ENCODE measurements at regions of chr5 and their contacts with region 1.

Region 1: GRCh38 chr5:107501965-107502675 is 168.6 kb downstream of the EFNA5 start:
- DNase-seq: no peak
- ATAC-seq: no peak
- H3K4me3 ChIP-seq: no peak overlapping the region
- H3K27ac ChIP-seq: no peak overlapping the region
- H3K4me1 ChIP-seq: no peaks in the 10 kb centered on the region
- H3K27me3 ChIP-seq: no peaks in the 10 kb centered on the region
- CTCF ChIP-seq: no peak
- EP300 ChIP-seq: no peak
- POLR2A ChIP-seq: no peak
- RAD21 ChIP-seq: no peak

Region 2: DNA sequence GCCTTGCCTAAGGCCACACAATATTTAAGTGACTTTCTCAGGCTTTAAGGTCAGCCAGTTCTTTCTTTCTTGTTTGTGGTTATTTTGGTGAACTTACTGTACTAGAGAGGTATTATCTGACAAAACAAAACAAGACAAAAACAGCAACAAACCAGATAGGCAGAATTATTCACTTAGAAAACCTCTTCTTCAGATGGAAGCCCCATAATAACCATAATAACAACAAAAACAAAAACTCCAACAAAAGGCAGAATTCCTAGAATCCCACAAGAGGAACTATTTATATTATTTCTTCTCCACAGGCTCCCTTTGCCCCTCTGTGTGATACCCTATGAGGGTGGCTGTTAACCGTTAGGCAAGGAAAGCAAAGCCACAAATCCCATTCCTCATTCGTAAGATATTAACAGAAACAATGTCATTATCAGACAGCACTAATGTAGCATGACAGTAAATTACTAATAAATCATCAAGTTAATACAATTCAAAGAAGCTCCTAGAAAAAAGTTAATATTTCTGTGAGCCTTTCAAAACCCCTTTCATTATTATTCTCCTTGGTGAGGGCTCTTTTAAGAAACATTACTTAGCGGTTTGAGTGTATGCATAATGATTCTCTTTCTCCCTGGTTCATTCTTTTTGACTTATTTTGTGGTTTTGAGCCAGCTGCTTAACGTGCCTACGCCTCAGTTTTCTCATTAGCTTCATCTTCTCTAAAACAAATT is 106.3 kb before region 1 on chr5:
- CTCF ChIA-PET with region 1: no interaction called
- POLR2A ChIA-PET with region 1: no interaction called
- RAD21 ChIA-PET with region 1: no interaction called
- SMC1A ChIA-PET with region 1: no interaction called
- in situ Hi-C with region 1: no loop called
- intact Hi-C with region 1: no loop called
- DNase-seq: peak; percentile 57
- ATAC-seq: peak; percentile 83
- H3K4me3 ChIP-seq: no peak overlapping the region
- H3K27ac ChIP-seq: no peak overlapping the region
- H3K4me1 ChIP-seq: peaks cover 8% of the 10 kb centered on the region; the same call in 1 of the 2 replicates
- H3K27me3 ChIP-seq: no peaks in the 10 kb centered on the region
- CTCF ChIP-seq: no peak
- EP300 ChIP-seq: peak; percentile 62 to 68; a peak in 3 of 4 replicates
- POLR2A ChIP-seq: no peak
- RAD21 ChIP-seq: no peak

Region 3: DNA sequence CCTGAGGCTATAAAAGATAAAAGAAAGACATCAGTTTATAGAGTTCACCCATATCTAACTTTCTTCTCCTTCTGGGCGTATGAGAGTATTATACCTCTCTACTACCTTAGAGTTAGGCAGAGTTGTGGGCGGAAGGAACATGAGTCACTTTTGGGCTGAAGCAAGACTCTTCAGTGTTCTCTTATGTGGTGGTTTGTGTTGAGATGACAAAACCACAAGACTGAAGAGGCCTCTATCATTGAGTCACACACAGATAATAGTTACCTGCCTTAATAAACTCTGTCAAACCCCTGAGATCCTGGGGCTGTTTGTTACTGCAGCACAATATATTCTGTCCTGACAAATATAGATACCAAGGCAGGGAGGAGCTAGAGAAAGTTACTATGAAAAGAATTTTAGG is 15.6 kb before region 1 on chr5:
- CTCF ChIA-PET with region 1: interaction called, 4 read pairs
- POLR2A ChIA-PET with region 1: interaction called, 3 read pairs
- RAD21 ChIA-PET with region 1: no interaction called
- SMC1A ChIA-PET with region 1: interaction called, 11 read pairs
- in situ Hi-C with region 1: no loop called
- intact Hi-C with region 1: no loop called
- DNase-seq: peak; percentile 48
- ATAC-seq: peak; percentile 91
- H3K4me3 ChIP-seq: no peak overlapping the region
- H3K27ac ChIP-seq: no peak overlapping the region
- H3K4me1 ChIP-seq: peaks cover 24% of the 10 kb centered on the region
- H3K27me3 ChIP-seq: no peaks in the 10 kb centered on the region
- CTCF ChIP-seq: no peak
- EP300 ChIP-seq: peak in 1 of 2 experiments; percentile 47; a peak in 1 of 4 replicates
- POLR2A ChIP-seq: no peak
- RAD21 ChIP-seq: no peak

Region 4: GRCh38 chr5:107513337-107514085 is 11.4 kb after region 1 on chr5:
- CTCF ChIA-PET with region 1: interaction called, 6 read pairs
- POLR2A ChIA-PET with region 1: no interaction called
- RAD21 ChIA-PET with region 1: interaction called, 3 read pairs
- SMC1A ChIA-PET with region 1: interaction called, 21 read pairs
- in situ Hi-C with region 1: no loop called
- intact Hi-C with region 1: no loop called
- DNase-seq: peak; percentile 39
- ATAC-seq: peak; percentile 44
- H3K4me3 ChIP-seq: 0 out of 2 replicates have a peak overlapping the region, but pooled peaks have one; percentile 11
- H3K27ac ChIP-seq: peak overlapping the region; percentile 49
- H3K4me1 ChIP-seq: peaks cover 10% of the 10 kb centered on the region
- H3K27me3 ChIP-seq: no peaks in the 10 kb centered on the region
- CTCF ChIP-seq: no peak
- EP300 ChIP-seq: no peak
- POLR2A ChIP-seq: no peak
- RAD21 ChIP-seq: no peak

Region 5: DNA sequence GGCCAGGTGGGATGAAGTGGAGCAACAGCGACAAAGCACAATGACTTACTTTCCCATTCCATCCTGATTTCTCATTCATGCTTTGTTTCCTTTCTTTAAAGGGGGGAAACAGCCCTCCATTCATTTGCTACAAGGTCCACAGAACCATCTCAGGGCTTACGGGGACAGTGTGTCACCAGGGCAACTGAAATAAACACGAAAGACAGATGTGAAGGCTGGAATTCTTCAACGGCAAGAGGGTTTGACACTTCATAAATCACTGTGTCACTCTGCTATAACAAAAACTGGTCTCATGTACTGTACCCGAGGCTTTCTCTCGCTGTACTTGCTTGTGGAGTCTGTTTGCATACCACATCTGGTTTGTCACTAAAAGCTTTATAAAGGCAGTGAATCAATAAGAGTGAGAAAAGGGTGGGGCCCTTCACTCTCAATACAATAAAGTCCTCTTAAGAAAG is 17.8 kb after region 1 on chr5:
- CTCF ChIA-PET with region 1: interaction called, 5 read pairs
- POLR2A ChIA-PET with region 1: no interaction called
- RAD21 ChIA-PET with region 1: interaction called, 3 read pairs
- SMC1A ChIA-PET with region 1: interaction called, 21 read pairs
- in situ Hi-C with region 1: no loop called
- intact Hi-C with region 1: no loop called
- DNase-seq: peak; percentile 33
- ATAC-seq: peak; percentile 77
- H3K4me3 ChIP-seq: no peak overlapping the region
- H3K27ac ChIP-seq: no peak overlapping the region
- H3K4me1 ChIP-seq: peaks cover 4% of the 10 kb centered on the region
- H3K27me3 ChIP-seq: no peaks in the 10 kb centered on the region
- CTCF ChIP-seq: no peak
- EP300 ChIP-seq: peak; percentile 10 to 42; a peak in 1 of 4 replicates
- POLR2A ChIP-seq: no peak
- RAD21 ChIP-seq: no peak

Measured in GM12878 (cell line).